Sigmoid colon (tissue), 7 donors: ENCODE measurements at regions of chr3 and their contacts with region 1.

Region 1: DNA sequence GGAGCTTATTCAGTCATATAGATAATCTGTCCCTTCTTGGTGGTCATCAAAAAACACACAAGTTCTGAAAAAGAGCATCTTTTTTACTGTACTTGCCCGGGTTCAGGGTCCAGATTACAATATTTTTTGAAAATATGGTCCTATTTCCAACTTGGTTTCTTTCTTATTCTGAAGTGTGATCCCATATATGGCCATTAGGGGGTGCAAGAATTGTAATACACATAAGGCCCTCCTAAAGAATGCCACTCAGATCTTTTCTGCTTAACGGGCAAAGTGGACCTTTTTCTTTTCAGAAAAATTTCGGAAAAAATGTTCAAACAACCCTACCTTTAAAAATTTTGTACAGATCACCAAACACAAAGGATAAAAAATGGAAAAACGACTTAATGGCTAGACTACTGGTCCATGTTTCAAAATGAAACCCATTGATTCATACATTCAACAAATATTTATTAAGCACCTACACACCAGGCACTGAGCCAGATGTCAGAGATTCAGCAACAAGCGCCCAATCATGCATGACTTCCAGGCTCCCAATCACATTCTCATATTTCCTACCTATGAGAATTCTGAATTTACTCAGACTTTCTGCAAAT is 102.0 kb upstream of the MYRIP start:
- DNase-seq: no peak
- H3K4me3 ChIP-seq: no peak overlapping the region
- H3K27ac ChIP-seq: no peak overlapping the region
- H3K4me1 ChIP-seq: no peaks in the 10 kb centered on the region
- H3K27me3 ChIP-seq: no peaks in the 10 kb centered on the region
- CTCF ChIP-seq: peak in 3 of 4 experiments; percentile 37 to 60 (median 41)
- EP300 ChIP-seq: no peak
- POLR2A ChIP-seq: no peak

Region 2: GRCh38 chr3:39592352-39593050 is 114.9 kb before region 1 on chr3:
- intact Hi-C with region 1: no loop called
- DNase-seq: no peak
- H3K4me3 ChIP-seq: no peak overlapping the region
- H3K27ac ChIP-seq: no peak overlapping the region
- H3K4me1 ChIP-seq: no peaks in the 10 kb centered on the region
- H3K27me3 ChIP-seq: no peaks in the 10 kb centered on the region
- CTCF ChIP-seq: no peak
- EP300 ChIP-seq: no peak
- POLR2A ChIP-seq: no peak

Region 3: GRCh38 chr3:39744746-39745145 is 37.3 kb after region 1 on chr3:
- intact Hi-C with region 1: no loop called
- DNase-seq: no peak
- H3K4me3 ChIP-seq: no peak overlapping the region
- H3K27ac ChIP-seq: no peak overlapping the region
- H3K4me1 ChIP-seq: no peaks in the 10 kb centered on the region
- H3K27me3 ChIP-seq: no peaks in the 10 kb centered on the region
- CTCF ChIP-seq: no peak
- EP300 ChIP-seq: no peak
- POLR2A ChIP-seq: no peak

Region 4: DNA sequence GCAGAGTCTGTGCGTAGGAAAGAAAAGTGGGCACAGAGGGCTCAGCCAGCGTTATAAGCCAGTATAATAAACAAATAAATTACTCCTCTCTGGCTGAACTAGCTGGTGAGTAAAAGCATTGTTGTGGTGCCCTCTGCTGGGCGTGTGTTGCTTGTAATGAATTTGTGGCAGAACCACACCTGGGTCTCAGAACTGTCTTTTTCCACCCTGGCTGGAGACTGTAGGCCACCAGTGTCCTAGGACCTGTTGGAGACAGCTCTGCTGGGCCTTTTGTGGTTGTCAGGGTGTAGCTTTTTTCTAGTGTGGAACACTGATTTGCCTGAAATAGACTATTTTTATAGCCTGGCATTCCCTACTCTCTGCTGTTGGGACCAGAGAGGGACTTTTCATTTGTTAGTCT is 471.6 kb after region 1 on chr3:
- intact Hi-C with region 1: loop called (anchors 5 kb)
- DNase-seq: peak; percentile 71
- H3K4me3 ChIP-seq: no peak overlapping the region
- H3K27ac ChIP-seq: no peak overlapping the region
- H3K4me1 ChIP-seq: peaks cover 0 to 6% (median 0%) of the 10 kb centered on the region in 4 donors
- H3K27me3 ChIP-seq: no peaks in the 10 kb centered on the region
- CTCF ChIP-seq: peak in 3 of 4 experiments; percentile 48 to 67 (median 58)
- EP300 ChIP-seq: no peak
- POLR2A ChIP-seq: no peak